CD14-positive monocyte (primary cell): ENCODE measurements at regions of chrX and their contacts with region 1.

Region 1: GRCh38 chrX:150365051-150365989 is 2.2 kb downstream of the MAMLD1 start:
- DNase-seq: peak in 1 of 3 donors; percentile 46
- H3K4me3 ChIP-seq: peak overlapping the region; percentile 45 to 73 (median 48)
- H3K4me3 Mint-ChIP-seq: peak overlapping the region; percentile 82 to 91
- H3K27ac ChIP-seq: no peak overlapping the region
- H3K27ac Mint-ChIP-seq: peak overlapping the region in 1 of 7 donors; percentile 30
- H3K4me1 ChIP-seq: peaks cover 50 to 54% of the 10 kb centered on the region in 2 donors
- H3K4me1 Mint-ChIP-seq: peaks cover 28% of the 10 kb centered on the region
- H3K27me3 ChIP-seq: peaks cover 19 to 60% of the 10 kb centered on the region in 2 donors
- H3K27me3 Mint-ChIP-seq: peaks cover 41 to 71% (median 51%) of the 10 kb centered on the region in 3 donors
- CTCF ChIP-seq: peak; percentile 55

Region 2: DNA sequence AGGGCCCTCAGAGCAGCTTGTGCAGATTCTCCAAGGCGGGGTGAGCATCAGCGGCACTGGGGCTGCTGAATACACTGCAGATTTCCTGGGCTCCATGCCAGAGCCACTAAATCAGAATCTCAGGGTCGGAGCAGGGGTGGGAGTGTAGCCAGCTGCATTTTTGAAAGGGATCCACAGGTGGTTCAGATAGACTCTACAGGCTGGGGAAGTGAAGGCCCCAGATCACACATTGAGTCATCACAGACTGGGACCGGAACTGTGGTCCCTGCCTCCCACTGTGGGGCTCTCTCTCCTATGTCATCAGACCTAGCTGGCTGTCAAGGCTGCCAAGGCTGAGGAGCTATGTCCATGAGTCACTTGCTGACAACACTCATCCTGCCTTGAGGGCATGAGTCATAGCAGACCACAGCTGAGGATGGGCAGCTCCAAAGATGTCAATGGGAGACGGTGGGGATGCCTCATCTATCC is 164.5 kb before region 1 on chrX:
- intact Hi-C with region 1: loop called in 1 of 2 experiments (anchors 10 kb)
- DNase-seq: peak; percentile 87 to 97 (median 91)
- H3K4me3 ChIP-seq: no peak overlapping the region
- H3K4me3 Mint-ChIP-seq: no peak overlapping the region
- H3K27ac ChIP-seq: peak overlapping the region; percentile 37 to 73
- H3K27ac Mint-ChIP-seq: peak overlapping the region; percentile 68 to 98 (median 85)
- H3K4me1 ChIP-seq: peaks cover 23 to 28% of the 10 kb centered on the region in 2 donors
- H3K4me1 Mint-ChIP-seq: peaks cover 26% of the 10 kb centered on the region
- H3K27me3 ChIP-seq: no peaks in the 10 kb centered on the region
- H3K27me3 Mint-ChIP-seq: peaks cover 0 to 1% (median 0%) of the 10 kb centered on the region in 3 donors
- CTCF ChIP-seq: no peak

Region 3: GRCh38 chrX:150482537-150483206 is 117.4 kb after region 1 on chrX:
- intact Hi-C with region 1: loop called (anchors 5 to 10 kb)
- DNase-seq: peak; percentile 25 to 83 (median 37)
- H3K4me3 ChIP-seq: no peak overlapping the region
- H3K4me3 Mint-ChIP-seq: no peak overlapping the region
- H3K27ac ChIP-seq: no peak overlapping the region
- H3K27ac Mint-ChIP-seq: peak overlapping the region in 1 of 7 donors; percentile 47
- H3K4me1 ChIP-seq: peaks cover 2 to 7% of the 10 kb centered on the region in 2 donors
- H3K4me1 Mint-ChIP-seq: peaks cover 18% of the 10 kb centered on the region
- H3K27me3 ChIP-seq: peaks cover 0 to 2% of the 10 kb centered on the region in 2 donors
- H3K27me3 Mint-ChIP-seq: peaks cover 0 to 6% (median 3%) of the 10 kb centered on the region in 3 donors
- CTCF ChIP-seq: no peak

Region 4: GRCh38 chrX:150568320-150569154 is 203.2 kb after region 1 on chrX and contains the start of gene MTM1:
- intact Hi-C with region 1: loop called in 1 of 2 experiments (anchors 5 kb)
- DNase-seq: peak; percentile 92 to 94 (median 93)
- H3K4me3 ChIP-seq: peak within 1 kb of the TSS; percentile 61 to 78 (median 68)
- H3K4me3 Mint-ChIP-seq: peak within 1 kb of the TSS; percentile 78 to 86
- H3K27ac ChIP-seq: peak within 1 kb of the TSS; percentile 78
- H3K27ac Mint-ChIP-seq: peak within 1 kb of the TSS; percentile 79 to 91 (median 88)
- H3K4me1 ChIP-seq: peaks cover 39% of the 10 kb centered on the region in 2 donors
- H3K4me1 Mint-ChIP-seq: peaks cover 42% of the 10 kb centered on the region
- H3K27me3 ChIP-seq: no peaks in the 10 kb centered on the region
- H3K27me3 Mint-ChIP-seq: peaks cover 0 to 13% (median 0%) of the 10 kb centered on the region in 3 donors
- CTCF ChIP-seq: no peak
- polyA plus RNA-seq, gene MTM1: 6.5 to 23.4 (median 17.0) TPM